Prostate gland (tissue), 2 donors: ENCODE measurements at regions of chr20 and their contacts with region 1.

Region 1: GRCh38 chr20:48921151-48921898 is at the start of gene ARFGEF2:
- DNase-seq: peak; percentile 92
- H3K4me3 ChIP-seq: peak within 1 kb of the TSS; percentile 87 to 99
- H3K27ac ChIP-seq: peak within 1 kb of the TSS; percentile 90 to 98
- H3K4me1 ChIP-seq: peaks cover 3% of the 10 kb centered on the region
- H3K27me3 ChIP-seq: no peaks in the 10 kb centered on the region
- CTCF ChIP-seq: peak in 2 of 4 experiments; percentile 44 to 71
- POLR2A ChIP-seq: peak; percentile 98
- total RNA-seq, gene ARFGEF2: 36.3 to 51.6 TPM

Region 2: DNA sequence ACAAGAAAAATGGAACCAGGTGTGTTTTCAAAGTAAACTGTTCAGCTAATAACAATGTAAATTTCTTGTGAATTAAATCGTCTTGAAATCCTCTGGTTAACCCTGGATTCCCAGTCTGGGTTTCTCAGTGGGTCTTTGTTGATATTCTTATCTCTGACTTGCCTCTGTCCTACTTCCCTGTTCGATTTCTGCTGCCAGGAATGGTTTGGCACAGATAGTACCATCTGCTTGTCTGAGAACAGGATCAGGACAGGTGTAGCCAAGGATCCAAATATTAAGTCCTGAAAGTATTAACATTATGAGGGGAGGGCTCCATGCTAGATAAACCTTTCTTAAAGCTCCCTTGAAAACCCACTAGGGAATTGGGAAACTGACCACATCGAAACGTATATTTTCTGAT is 30.3 kb after region 1 on chr20:
- intact Hi-C with region 1: no loop called
- DNase-seq: peak; percentile 26
- H3K4me3 ChIP-seq: no peak overlapping the region
- H3K27ac ChIP-seq: peak overlapping the region; percentile 7 to 42
- H3K4me1 ChIP-seq: peaks cover under 1% of the 10 kb centered on the region
- H3K27me3 ChIP-seq: no peaks in the 10 kb centered on the region
- CTCF ChIP-seq: no peak
- POLR2A ChIP-seq: no peak

Region 3: DNA sequence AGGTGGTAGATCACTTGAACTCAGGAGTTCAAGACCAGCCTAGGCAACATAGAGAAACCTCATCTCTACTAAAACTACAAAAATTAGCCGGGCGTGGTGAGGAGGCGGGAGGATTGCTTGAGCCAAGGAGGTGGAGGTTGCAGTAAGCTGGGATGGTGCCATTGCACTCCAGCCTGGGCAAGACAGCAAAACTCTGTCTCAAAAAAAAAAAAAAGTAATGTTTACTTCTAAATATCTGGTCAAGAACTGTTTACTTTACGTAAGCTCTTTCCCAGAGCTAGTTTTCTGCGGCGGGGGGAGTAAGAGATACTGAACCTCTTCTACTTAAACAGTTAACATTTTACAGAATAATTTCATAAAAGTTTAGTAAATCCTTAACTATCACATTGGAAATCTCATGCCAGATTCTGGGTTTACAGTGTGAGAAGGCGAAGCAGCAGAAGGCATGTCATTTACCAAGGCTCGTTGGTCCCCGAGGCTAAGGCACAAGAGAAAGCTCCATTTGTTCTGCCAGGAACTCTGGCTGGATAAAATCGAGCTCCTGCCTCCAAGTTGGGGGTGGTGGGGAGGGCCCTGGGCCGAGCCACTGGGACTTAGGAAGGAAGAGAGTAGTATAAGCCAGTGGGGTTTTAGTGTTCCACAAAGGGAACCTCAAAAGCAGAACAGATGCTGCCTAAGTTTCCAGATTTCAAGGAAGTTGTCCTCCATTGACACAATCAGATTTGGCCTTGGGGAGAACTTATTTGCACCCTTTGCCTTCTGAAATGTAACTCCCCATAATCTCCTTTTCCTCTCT is 41.8 kb after region 1 on chr20:
- intact Hi-C with region 1: loop called (anchors 5 kb)
- DNase-seq: no peak
- H3K4me3 ChIP-seq: no peak overlapping the region
- H3K27ac ChIP-seq: peak overlapping the region; percentile 39
- H3K4me1 ChIP-seq: no peaks in the 10 kb centered on the region
- H3K27me3 ChIP-seq: no peaks in the 10 kb centered on the region
- CTCF ChIP-seq: no peak
- POLR2A ChIP-seq: no peak

Region 4: GRCh38 chr20:49140834-49141233 is 219.5 kb after region 1 on chr20:
- intact Hi-C with region 1: no loop called
- DNase-seq: no peak
- H3K4me3 ChIP-seq: no peak overlapping the region
- H3K27ac ChIP-seq: peak overlapping the region; percentile 26 to 30
- H3K4me1 ChIP-seq: no peaks in the 10 kb centered on the region
- H3K27me3 ChIP-seq: no peaks in the 10 kb centered on the region
- CTCF ChIP-seq: no peak
- POLR2A ChIP-seq: no peak